ENCODE measurements at regions of chr2 and their contacts with region 1.

Region 1: GRCh38 chr2:20097879-20098714 is 46.7 kb upstream of the LAPTM4A start:
- DNase-seq: peak; percentile 88
- H3K4me3 ChIP-seq: no peak overlapping the region
- H3K27ac ChIP-seq: no peak overlapping the region
- H3K4me1 ChIP-seq: peaks cover 0 to 9% (median 1%) of the 10 kb centered on the region in 4 donors
- H3K27me3 ChIP-seq: no peaks in the 10 kb centered on the region
- CTCF ChIP-seq: peak; percentile 86 to 91 (median 89)
- EP300 ChIP-seq: no peak
- POLR2A ChIP-seq: no peak

Region 2: GRCh38 chr2:19963386-19963785 is 134.7 kb before region 1 on chr2:
- in situ Hi-C with region 1: loop called in 1 of 4 experiments (anchors 10 kb)
- intact Hi-C with region 1: no loop called
- DNase-seq: no peak
- H3K4me3 ChIP-seq: no peak overlapping the region
- H3K27ac ChIP-seq: no peak overlapping the region
- H3K4me1 ChIP-seq: no peaks in the 10 kb centered on the region
- H3K27me3 ChIP-seq: no peaks in the 10 kb centered on the region
- CTCF ChIP-seq: no peak
- EP300 ChIP-seq: no peak
- POLR2A ChIP-seq: no peak

Region 3: DNA sequence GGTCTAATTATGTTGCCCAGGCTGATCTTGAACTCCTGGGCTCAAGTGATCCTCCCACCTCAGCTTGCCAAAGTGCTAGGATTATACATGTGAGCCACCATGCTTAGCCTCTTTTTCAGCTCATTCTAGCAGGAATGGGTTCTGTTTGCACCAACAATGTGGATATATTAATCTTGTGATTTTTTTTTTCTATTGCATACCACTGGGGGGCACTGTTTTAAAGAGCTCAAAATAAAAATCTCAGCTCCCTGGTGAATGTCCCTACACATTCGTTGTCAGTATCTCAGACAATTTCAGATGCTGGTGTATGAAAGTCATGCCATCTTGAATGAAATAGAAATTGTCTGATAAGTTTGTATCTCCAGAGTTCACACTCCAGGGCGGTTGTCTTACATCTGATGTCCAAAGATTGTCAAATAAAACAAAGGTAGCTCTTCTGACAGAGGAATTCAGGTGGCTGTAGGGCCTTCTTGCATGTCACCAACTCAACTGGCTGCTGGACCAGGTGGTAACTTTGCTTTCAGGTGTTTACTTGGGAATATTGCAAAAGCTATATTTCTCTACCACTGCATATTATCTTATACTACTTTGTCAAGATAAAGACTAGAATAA is 82.5 kb before region 1 on chr2:
- in situ Hi-C with region 1: loop called (anchors 5 to 10 kb)
- intact Hi-C with region 1: loop called (anchors 2 kb)
- DNase-seq: no peak
- H3K4me3 ChIP-seq: no peak overlapping the region
- H3K27ac ChIP-seq: no peak overlapping the region
- H3K4me1 ChIP-seq: peaks cover 0 to 13% (median 10%) of the 10 kb centered on the region in 4 donors
- H3K27me3 ChIP-seq: peaks cover 28% of the 10 kb centered on the region
- CTCF ChIP-seq: peak; percentile 60 to 75 (median 66)
- EP300 ChIP-seq: no peak
- POLR2A ChIP-seq: no peak